ENCODE measurements at regions of chr11 and their contacts with region 1.

Region 1: GRCh38 chr11:75241036-75241905 is 697 bp downstream of the TPBGL start:
- DNase-seq: peak; percentile 98
- H3K4me3 ChIP-seq: peak overlapping the region; percentile 53
- H3K27ac ChIP-seq: no peak overlapping the region; a peak in 1 of 4 replicates
- H3K4me1 ChIP-seq: no peaks in the 10 kb centered on the region; a peak in 1 of 4 replicates
- H3K27me3 ChIP-seq: peaks cover 37% of the 10 kb centered on the region
- CTCF ChIP-seq: peak; percentile 60
- EP300 ChIP-seq: no peak
- RAD21 ChIP-seq: peak; percentile 71

Region 2: GRCh38 chr11:74929431-74930363 is 311.6 kb before region 1 on chr11:
- CTCF ChIA-PET with region 1: interaction called, 113 read pairs
- POLR2A ChIA-PET with region 1: no interaction called
- DNase-seq: peak; percentile 58
- H3K4me3 ChIP-seq: no peak overlapping the region
- H3K27ac ChIP-seq: no peak overlapping the region; a peak in 1 of 4 replicates
- H3K4me1 ChIP-seq: peaks cover 0 to 12% of the 10 kb centered on the region in 2 experiments; a peak in 2 of 4 replicates
- H3K27me3 ChIP-seq: no peaks in the 10 kb centered on the region
- CTCF ChIP-seq: peak; percentile 95
- EP300 ChIP-seq: no peak
- RAD21 ChIP-seq: peak; percentile 93

Region 3: GRCh38 chr11:75022759-75023396 is 218.4 kb before region 1 on chr11:
- CTCF ChIA-PET with region 1: interaction called, 258 read pairs
- POLR2A ChIA-PET with region 1: interaction called, 3 read pairs
- DNase-seq: peak; percentile 79
- H3K4me3 ChIP-seq: no peak overlapping the region; a peak in 1 of 4 replicates
- H3K27ac ChIP-seq: no peak overlapping the region
- H3K4me1 ChIP-seq: peaks cover 0 to 13% of the 10 kb centered on the region in 2 experiments; a peak in 1 of 4 replicates
- H3K27me3 ChIP-seq: no peaks in the 10 kb centered on the region
- CTCF ChIP-seq: peak; percentile 96
- EP300 ChIP-seq: no peak
- RAD21 ChIP-seq: peak; percentile 95

Region 4: DNA sequence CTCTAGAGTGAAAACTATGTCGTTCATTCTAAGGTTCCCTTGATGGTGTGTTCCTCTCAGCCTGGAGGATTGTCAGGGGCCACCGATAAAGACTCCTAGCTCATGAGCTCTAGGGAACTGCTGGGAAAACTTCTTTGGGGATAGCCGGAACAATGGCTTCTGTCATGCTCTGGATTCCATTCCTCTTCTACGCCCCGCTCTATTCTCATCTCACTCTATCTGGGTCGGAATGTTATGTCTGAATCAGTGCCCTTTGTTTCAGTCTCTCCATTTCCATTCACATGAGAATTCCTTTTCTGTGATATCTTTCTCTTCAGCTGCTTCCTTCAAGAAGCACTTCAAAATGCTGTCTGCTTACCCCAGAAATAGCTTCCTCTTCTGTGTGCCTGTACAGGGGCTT is 107.3 kb before region 1 on chr11:
- CTCF ChIA-PET with region 1: interaction called, 1,115 read pairs
- POLR2A ChIA-PET with region 1: no interaction called
- DNase-seq: no peak
- H3K4me3 ChIP-seq: no peak overlapping the region
- H3K27ac ChIP-seq: no peak overlapping the region
- H3K4me1 ChIP-seq: no peaks in the 10 kb centered on the region; a peak in 1 of 4 replicates
- H3K27me3 ChIP-seq: peaks cover 13% of the 10 kb centered on the region; the same call in 1 of the 2 replicates
- CTCF ChIP-seq: no peak
- EP300 ChIP-seq: no peak
- RAD21 ChIP-seq: no peak

Region 5: GRCh38 chr11:75195121-75195551 is 46.1 kb before region 1 on chr11:
- CTCF ChIA-PET with region 1: interaction called, 25 read pairs
- POLR2A ChIA-PET with region 1: interaction called, 3 read pairs
- DNase-seq: peak; percentile 71
- H3K4me3 ChIP-seq: no peak overlapping the region
- H3K27ac ChIP-seq: peak overlapping the region in 1 of 2 experiments; percentile 4; a peak in 1 of 4 replicates
- H3K4me1 ChIP-seq: peaks cover 0 to 26% of the 10 kb centered on the region in 2 experiments; a peak in 1 of 4 replicates
- H3K27me3 ChIP-seq: no peaks in the 10 kb centered on the region
- CTCF ChIP-seq: no peak
- EP300 ChIP-seq: peak in 1 of 2 experiments; percentile 19; a peak in 1 of 4 replicates
- RAD21 ChIP-seq: no peak

Region 6: DNA sequence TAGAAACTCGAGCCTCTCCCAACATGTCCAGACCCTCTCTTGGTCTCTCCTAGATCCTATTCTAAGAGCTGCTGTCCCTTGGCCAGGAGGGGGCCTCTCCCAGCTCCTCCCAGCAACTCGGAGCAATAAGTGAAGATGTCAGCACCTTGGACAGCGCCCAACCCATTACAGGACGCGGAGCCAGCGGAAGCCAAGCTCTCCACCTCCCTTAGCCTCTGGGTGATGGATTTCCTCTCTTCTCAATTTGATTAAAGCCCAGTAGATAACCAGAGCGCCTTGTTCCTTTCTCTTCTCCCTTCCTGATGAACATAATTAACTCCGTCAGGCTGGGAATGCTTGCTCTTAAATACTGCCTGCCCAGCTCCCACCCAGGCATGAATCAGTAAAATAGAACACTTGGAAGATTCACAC is 26.9 kb before region 1 on chr11:
- CTCF ChIA-PET with region 1: interaction called, 362 read pairs
- POLR2A ChIA-PET with region 1: interaction called, 14 read pairs
- DNase-seq: peak; percentile 81
- H3K4me3 ChIP-seq: no peak overlapping the region
- H3K27ac ChIP-seq: peak overlapping the region in 1 of 2 experiments; percentile 93; a peak in 2 of 4 replicates
- H3K4me1 ChIP-seq: peaks cover 0 to 11% of the 10 kb centered on the region in 2 experiments; a peak in 2 of 4 replicates
- H3K27me3 ChIP-seq: no peaks in the 10 kb centered on the region
- CTCF ChIP-seq: peak; percentile 58
- EP300 ChIP-seq: peak in 1 of 2 experiments; percentile 84; a peak in 2 of 4 replicates
- RAD21 ChIP-seq: peak; percentile 52

Region 7: GRCh38 chr11:75280227-75280701 is 39.0 kb after region 1 on chr11:
- CTCF ChIA-PET with region 1: interaction called, 16 read pairs
- POLR2A ChIA-PET with region 1: no interaction called
- DNase-seq: peak; percentile 95
- H3K4me3 ChIP-seq: peak overlapping the region in 1 of 2 experiments; percentile 18; a peak in 1 of 4 replicates
- H3K27ac ChIP-seq: peak overlapping the region in 1 of 2 experiments; percentile 62; a peak in 2 of 4 replicates
- H3K4me1 ChIP-seq: peaks cover 0 to 19% of the 10 kb centered on the region in 2 experiments; a peak in 1 of 4 replicates
- H3K27me3 ChIP-seq: no peaks in the 10 kb centered on the region
- CTCF ChIP-seq: peak; percentile 89
- EP300 ChIP-seq: no peak
- RAD21 ChIP-seq: peak; percentile 99